ENCODE measurements at regions of chr3 and their contacts with region 1.

Region 1: GRCh38 chr3:128187495-128187894 is 34.2 kb downstream of the EEFSEC start:
- DNase-seq: peak; percentile 95
- H3K4me3 ChIP-seq: peak overlapping the region; percentile 28
- H3K27ac ChIP-seq: peak overlapping the region; percentile 82
- H3K4me1 ChIP-seq: peaks cover 44% of the 10 kb centered on the region
- CTCF ChIP-seq: no peak

Region 2: GRCh38 chr3:128176276-128176831 is 11.1 kb before region 1 on chr3:
- CTCF ChIA-PET with region 1: no interaction called
- POLR2A ChIA-PET with region 1: interaction called, 16 read pairs
- intact Hi-C with region 1: no loop called
- DNase-seq: no peak
- H3K4me3 ChIP-seq: no peak overlapping the region
- H3K27ac ChIP-seq: no peak overlapping the region
- H3K4me1 ChIP-seq: peaks cover 46% of the 10 kb centered on the region
- CTCF ChIP-seq: no peak